Activated CD4-positive, alpha-beta T cell treated with anti-CD3 and anti-CD28 coated beads, Interleukin-2, amount 10 ng/mL, durations not matched to agents 24 days and 14 days (primary cell): ENCODE measurements at regions of chr5 and their contacts with region 1.

Region 1: GRCh38 chr5:32613050-32613672 is 27.8 kb downstream of the SUB1 start:
- DNase-seq: peak; percentile 95
- H3K4me3 Mint-ChIP-seq: no peak overlapping the region
- H3K27ac Mint-ChIP-seq: no peak overlapping the region
- H3K4me1 Mint-ChIP-seq: peaks cover 3% of the 10 kb centered on the region
- H3K27me3 Mint-ChIP-seq: no peaks in the 10 kb centered on the region

Region 2: DNA sequence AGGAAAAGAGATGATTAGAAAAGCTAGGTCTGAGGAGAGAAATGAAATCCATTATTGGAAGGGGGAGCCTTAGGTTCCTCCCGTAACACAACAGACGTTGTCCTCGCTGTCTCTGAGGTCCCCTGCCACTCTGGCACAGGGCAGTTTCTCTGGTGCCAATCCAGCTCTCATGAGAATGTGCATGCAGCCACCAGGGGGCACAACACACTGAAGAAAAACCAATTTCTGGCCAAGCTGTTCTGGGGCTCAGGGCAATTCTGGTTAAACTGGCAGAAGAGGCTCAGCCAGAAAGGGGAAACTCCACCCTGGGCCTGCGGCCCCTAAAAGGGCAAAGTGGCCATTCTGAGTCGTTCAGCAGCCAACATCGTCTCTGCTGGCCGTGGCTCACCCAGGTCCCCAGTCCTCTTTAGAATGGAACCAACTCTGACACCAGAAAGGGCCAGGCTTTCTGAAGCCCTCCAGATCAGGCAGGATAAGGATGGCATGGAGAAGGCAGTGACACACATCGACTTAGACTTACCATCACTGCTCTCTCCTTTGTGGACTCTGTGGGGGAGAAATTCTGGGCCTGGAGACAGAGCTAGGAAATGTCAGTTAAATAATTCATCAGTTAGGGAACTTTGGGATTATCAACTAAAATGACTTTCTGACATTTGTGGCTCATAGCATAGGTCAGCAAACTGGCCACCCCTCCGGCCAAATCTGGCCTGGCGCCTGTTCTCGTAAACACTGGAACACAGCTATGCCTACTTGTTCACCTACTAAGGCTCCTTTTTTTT is 380.5 kb before region 1 on chr5:
- intact Hi-C with region 1: loop called (anchors 1 kb)
- DNase-seq: peak; percentile 93
- H3K4me3 Mint-ChIP-seq: no peak overlapping the region
- H3K27ac Mint-ChIP-seq: peak overlapping the region; percentile 45
- H3K4me1 Mint-ChIP-seq: peaks cover 15% of the 10 kb centered on the region
- H3K27me3 Mint-ChIP-seq: no peaks in the 10 kb centered on the region

Region 3: GRCh38 chr5:32329308-32329834 is 283.8 kb before region 1 on chr5:
- intact Hi-C with region 1: loop called (anchors 2 kb)
- DNase-seq: peak; percentile 87
- H3K4me3 Mint-ChIP-seq: no peak overlapping the region
- H3K27ac Mint-ChIP-seq: no peak overlapping the region
- H3K4me1 Mint-ChIP-seq: peaks cover 4% of the 10 kb centered on the region
- H3K27me3 Mint-ChIP-seq: peaks cover 2% of the 10 kb centered on the region

Region 4: DNA sequence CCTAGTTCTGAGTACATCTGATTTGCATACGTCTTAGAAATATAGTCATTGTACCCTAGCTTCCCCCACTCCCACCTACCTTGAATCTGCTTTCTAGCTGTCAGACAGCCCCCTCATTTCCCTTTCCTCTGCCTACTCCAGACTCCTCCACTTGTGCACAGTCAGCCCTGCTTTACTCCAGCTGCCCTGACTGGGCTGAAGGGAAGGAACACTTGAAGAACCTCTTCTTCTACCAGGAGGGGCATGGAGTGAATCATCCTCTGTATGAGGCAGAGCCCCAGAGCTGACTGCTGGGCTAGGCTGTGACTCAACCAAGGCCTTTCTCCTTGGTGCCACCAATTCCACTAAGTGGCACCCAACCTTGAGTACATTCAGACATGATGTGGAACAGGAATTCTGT is 150.5 kb before region 1 on chr5:
- intact Hi-C with region 1: no loop called
- DNase-seq: no peak
- H3K4me3 Mint-ChIP-seq: no peak overlapping the region
- H3K27ac Mint-ChIP-seq: peak overlapping the region; percentile 83
- H3K4me1 Mint-ChIP-seq: peaks cover 7% of the 10 kb centered on the region
- H3K27me3 Mint-ChIP-seq: peaks cover 2% of the 10 kb centered on the region

Region 5: DNA sequence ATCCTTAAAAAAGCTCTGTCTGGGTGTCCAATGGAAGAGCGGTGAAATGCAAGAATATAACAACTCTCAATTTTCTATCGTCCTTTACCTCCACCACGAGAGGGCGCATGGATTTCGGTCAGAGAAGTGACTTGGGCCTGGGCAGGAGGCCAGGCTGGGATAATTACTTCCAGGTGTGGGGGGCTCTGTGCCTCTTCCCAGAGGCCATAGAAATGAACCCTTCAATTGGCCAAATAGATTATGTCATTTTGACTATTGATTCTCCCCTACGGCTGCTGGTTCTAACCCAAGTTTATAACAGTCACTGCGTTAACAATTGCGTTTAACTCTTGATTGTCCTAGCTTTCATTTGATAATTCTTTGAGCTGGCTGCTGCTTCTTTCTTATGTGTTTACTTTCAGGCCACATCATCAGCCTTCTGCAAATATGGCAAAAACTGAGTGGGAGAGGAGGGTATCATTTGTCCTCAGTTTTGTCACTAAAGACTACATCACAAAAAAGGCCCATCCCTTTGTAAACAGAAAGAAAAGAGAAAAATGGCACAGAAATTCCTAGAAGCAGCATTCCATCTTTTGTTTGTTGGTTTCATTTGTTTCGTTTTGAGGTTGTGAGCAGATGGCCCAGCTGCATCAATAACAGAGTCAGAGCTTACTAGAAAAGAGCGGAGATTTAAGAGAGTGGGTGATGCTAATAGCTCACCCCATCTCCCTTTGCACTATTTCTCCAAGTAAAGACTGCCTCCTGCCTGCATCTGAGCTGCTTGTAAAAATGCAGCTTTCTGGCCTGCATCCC is 123.2 kb before region 1 on chr5:
- intact Hi-C with region 1: loop called (anchors 1 kb)
- DNase-seq: peak; percentile 91
- H3K4me3 Mint-ChIP-seq: no peak overlapping the region
- H3K27ac Mint-ChIP-seq: no peak overlapping the region
- H3K4me1 Mint-ChIP-seq: peaks cover 8% of the 10 kb centered on the region
- H3K27me3 Mint-ChIP-seq: no peaks in the 10 kb centered on the region

Region 6: DNA sequence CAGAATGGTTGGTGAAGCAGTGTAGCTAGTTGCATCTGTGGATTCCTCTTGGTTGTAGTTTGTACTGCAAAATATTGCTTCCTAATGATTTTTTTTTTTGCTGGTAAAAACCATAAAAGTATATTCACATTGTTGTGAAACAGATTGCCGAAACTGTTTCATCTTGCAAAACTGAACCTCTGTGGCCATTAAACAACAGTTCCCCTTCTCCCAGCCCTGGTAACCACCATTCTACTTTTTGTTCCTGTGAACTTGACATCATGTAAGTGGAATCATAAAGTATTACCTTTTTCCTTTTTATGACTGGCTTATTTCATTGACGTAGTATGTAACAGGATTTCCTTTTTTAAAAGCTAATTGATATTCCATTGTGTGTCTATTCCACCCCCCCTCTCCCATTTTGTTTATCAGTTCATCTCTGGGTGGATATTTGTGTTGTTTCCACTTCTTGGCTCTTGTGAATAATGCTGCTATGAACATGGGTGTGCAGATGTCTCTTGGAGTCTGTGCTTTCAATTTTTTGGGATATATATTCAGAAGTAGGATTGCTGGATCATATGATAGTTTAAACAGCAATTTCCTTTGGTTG is 16.0 kb before region 1 on chr5:
- intact Hi-C with region 1: loop called (anchors 2 kb)
- DNase-seq: no peak
- H3K4me3 Mint-ChIP-seq: no peak overlapping the region
- H3K27ac Mint-ChIP-seq: peak overlapping the region; percentile 11
- H3K4me1 Mint-ChIP-seq: peaks cover 58% of the 10 kb centered on the region
- H3K27me3 Mint-ChIP-seq: no peaks in the 10 kb centered on the region

Region 7: DNA sequence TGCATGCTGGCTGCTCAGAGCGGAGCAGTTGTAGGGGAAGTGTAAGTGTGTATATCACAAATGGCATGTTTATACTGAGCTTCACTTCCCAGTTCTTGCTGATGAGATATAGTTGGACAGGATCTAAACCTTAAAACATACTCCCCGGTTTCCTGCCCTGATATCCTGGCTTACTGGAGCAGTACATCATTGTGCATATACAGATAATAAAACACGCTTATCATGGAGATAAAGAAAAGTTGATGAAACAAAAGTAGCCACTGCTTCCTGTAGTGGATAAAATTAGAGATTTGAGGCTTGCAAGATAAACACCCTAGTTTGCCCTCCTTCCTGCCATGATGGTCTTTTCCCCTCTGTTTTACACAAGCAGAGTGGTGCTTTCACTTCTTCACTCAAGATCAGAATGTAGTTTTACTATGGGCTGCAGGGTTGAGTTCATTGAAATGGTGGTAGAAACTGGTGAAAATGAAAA is 113.0 kb after region 1 on chr5:
- intact Hi-C with region 1: no loop called
- DNase-seq: no peak
- H3K4me3 Mint-ChIP-seq: no peak overlapping the region
- H3K27ac Mint-ChIP-seq: no peak overlapping the region
- H3K4me1 Mint-ChIP-seq: no peaks in the 10 kb centered on the region
- H3K27me3 Mint-ChIP-seq: peaks cover 8% of the 10 kb centered on the region